Activated CD4-positive, alpha-beta T cell treated with anti-CD3 and anti-CD28 coated beads for 36 hours (primary cell): ENCODE measurements at regions of chr15 and their contacts with region 1.

Region 1: DNA sequence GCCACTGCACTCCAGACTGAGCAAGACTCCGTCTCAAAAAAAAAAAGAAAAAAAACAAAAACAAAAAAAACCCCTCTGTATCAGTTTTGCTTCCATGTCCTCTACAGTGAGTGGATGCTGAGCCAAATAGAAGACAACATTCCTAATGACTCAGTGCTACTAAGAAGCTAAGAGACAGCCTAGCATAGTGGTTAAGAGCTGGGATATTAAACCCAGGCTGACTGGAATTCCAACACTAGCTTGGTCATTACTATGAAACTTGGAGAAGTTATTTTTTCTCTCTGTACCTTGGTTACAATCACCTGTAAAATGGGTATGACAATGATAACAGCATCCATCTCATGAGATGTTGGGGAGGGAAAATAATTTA is 60.9 kb upstream of the PYGO1 start:
- DNase-seq: no peak
- ATAC-seq: no peak
- H3K4me3 Mint-ChIP-seq: no peak overlapping the region
- H3K27ac Mint-ChIP-seq: no peak overlapping the region
- H3K4me1 Mint-ChIP-seq: peaks cover 4% of the 10 kb centered on the region
- H3K27me3 Mint-ChIP-seq: peaks cover 2% of the 10 kb centered on the region

Region 2: DNA sequence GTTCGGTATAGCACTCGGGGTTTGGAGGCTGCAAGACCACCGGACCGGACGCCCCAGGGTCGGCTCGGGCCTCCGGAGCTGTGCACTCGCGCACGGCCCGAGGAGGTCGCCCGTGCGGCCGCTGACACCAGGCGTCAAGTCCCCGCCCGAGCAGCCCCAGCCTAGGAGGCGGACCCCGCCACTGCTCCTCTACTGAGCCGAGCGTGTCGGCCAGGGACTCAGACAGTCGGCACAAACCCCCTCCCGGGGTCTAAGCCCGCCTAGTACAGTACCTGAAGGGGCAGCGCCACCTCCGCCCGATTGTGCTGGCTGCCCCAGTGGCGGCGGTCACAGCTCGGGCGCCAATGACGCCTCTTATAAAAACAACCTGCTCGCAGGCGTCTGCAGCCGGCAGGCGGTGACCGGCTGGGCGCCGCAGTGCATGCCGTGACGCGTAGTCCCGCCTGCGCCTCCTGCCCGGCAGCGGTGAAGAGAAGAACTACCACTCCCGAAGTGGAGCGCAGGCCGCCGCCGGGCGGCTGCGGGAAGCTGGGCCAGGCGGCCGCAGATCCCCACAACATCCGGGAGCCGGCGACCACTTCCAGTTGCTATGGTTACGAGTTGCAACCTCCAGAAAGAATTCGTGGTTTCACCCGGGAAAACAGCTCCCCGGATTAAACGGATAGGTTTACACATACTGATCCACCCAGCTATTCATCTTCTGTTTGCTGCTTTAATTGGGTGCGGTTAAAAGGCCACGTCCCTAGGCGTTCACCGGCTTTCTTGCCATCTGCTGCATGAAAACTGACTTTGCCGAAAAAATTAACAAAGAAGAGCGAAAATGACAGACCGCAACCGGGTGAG is 240.9 kb before region 1 on chr15 and contains the starts of genes CCPG1 and PIERCE2:
- CTCF ChIA-PET with region 1: no interaction called
- POLR2A ChIA-PET with region 1: no interaction called
- intact Hi-C with region 1: no loop called
- DNase-seq: peak; percentile 95
- ATAC-seq: peak; percentile 93
- H3K4me3 Mint-ChIP-seq: peak within 1 kb of the TSS; percentile 87
- H3K27ac Mint-ChIP-seq: peak within 1 kb of the TSS; percentile 90
- H3K4me1 Mint-ChIP-seq: peaks cover 24% of the 10 kb centered on the region
- H3K27me3 Mint-ChIP-seq: no peaks in the 10 kb centered on the region
- total RNA-seq, gene CCPG1: 11.3 to 12.2 TPM
- total RNA-seq, gene PIERCE2: 0.34 to 0.81 TPM

Region 3: GRCh38 chr15:55661428-55661827 is 12.4 kb after region 1 on chr15:
- CTCF ChIA-PET with region 1: interaction called, 25 read pairs
- POLR2A ChIA-PET with region 1: no interaction called
- intact Hi-C with region 1: no loop called
- DNase-seq: peak; percentile 24
- ATAC-seq: peak; percentile 89
- H3K4me3 Mint-ChIP-seq: no peak overlapping the region
- H3K27ac Mint-ChIP-seq: no peak overlapping the region
- H3K4me1 Mint-ChIP-seq: peaks cover 17% of the 10 kb centered on the region
- H3K27me3 Mint-ChIP-seq: no peaks in the 10 kb centered on the region

Region 4: GRCh38 chr15:55799291-55800212 is 150.5 kb after region 1 on chr15:
- CTCF ChIA-PET with region 1: interaction called, 4 read pairs
- POLR2A ChIA-PET with region 1: no interaction called
- intact Hi-C with region 1: loop called (anchors 1 kb)
- DNase-seq: peak; percentile 64
- ATAC-seq: no peak
- H3K4me3 Mint-ChIP-seq: no peak overlapping the region
- H3K27ac Mint-ChIP-seq: no peak overlapping the region
- H3K4me1 Mint-ChIP-seq: peaks cover 2% of the 10 kb centered on the region
- H3K27me3 Mint-ChIP-seq: peaks cover 12% of the 10 kb centered on the region

Region 5: DNA sequence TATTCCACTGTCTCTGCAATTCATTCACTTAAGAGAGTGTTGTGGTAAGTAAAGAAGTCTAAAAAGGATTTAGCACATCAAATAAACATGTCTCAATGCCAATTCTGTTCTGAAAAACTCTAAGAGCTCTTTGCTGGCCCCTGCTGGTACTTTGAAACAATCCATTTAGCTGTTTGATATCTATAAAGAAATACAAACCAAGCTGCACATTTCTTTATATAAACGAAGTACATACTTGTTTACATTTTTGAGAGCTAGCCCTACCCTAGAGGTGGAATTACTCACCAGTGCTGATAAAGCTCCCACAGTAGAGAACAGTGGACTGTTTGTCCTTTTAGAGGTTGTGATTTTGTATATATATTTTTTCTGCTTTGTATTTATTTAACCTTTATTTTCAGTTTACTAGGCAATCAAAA is 268.9 kb after region 1 on chr15:
- CTCF ChIA-PET with region 1: no interaction called
- POLR2A ChIA-PET with region 1: no interaction called
- intact Hi-C with region 1: loop called in 1 of 2 experiments (anchors 5 kb)
- DNase-seq: peak; percentile 26
- ATAC-seq: no peak
- H3K4me3 Mint-ChIP-seq: no peak overlapping the region
- H3K27ac Mint-ChIP-seq: no peak overlapping the region
- H3K4me1 Mint-ChIP-seq: peaks cover 4% of the 10 kb centered on the region
- H3K27me3 Mint-ChIP-seq: no peaks in the 10 kb centered on the region

Region 6: DNA sequence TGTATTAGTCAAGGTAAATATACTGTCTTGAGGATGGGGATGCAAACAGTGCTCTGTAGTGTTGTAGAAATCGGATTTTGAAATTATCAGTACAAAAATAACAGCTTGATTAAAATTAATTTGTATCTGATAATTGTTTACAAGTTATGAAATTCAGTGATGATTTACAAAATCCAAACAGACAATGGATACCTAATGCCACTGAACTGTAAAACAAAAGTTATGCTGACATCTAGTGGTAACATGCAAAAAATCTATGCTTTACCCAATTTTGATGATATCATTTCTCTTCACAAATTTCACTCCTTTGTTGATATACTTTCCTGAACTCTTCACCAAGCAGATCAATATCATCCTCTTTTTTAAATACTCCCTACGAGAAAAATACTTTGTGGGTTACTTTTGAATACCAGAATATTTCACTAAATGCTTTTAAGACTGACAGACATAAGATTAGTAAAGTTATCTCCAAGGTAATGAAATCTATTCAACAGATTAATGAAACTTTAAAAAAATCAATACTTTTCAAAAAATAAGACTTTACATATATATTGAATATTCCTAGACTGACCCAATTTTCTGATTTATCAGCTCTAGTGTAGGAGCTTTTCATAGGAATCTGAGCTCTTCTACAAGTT is 779.9 kb after region 1 on chr15:
- CTCF ChIA-PET with region 1: interaction called, 3 read pairs
- POLR2A ChIA-PET with region 1: no interaction called
- intact Hi-C with region 1: loop called in 1 of 2 experiments (anchors 1 kb)
- DNase-seq: no peak
- ATAC-seq: no peak
- H3K4me3 Mint-ChIP-seq: no peak overlapping the region
- H3K27ac Mint-ChIP-seq: no peak overlapping the region
- H3K4me1 Mint-ChIP-seq: no peaks in the 10 kb centered on the region
- H3K27me3 Mint-ChIP-seq: peaks cover 3% of the 10 kb centered on the region